ENCODE measurements at regions of chr3 and their contacts with region 1.

Region 1: DNA sequence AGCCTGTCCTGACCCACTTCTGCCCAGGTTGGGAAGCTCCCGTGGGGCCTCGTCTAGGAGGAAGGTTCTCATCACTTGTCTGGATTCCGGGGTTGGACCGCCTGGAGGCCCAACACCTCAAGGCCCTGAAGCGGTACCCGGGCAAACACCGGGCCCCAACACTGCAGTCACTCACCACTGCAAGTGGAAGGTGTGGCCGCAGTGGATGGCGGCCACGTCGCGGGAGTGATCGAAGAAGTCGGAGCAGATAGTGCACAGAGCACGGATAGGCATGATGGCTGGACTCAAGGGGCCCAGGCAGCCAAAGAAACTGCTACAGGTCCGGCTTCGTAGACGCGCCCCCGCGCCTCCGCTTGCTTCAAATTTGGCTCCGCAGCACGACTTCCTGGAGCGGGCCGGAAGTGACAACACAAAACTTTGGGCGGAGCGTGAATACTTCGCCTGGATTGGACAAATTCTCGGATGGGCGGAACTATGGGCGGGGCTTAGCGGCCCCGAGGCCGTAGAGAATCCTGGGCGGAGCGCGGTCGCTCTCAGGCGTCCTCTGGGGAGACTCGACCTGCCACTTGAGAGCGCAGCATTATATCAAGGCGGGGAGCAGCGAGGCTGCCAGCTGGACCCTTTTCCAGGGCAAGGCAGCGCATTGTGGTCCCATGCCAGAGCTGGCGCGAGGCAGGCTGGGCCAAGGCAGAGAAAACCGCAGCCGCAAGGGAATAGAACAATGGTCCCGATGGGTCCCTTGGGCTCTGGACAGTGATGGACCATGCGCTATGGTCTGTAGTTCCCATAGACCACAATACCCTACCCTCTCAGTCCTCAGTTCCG is at the start of gene TRAIP:
- DNase-seq: peak; percentile 83
- H3K4me3 ChIP-seq: peak within 1 kb of the TSS; percentile 80
- CTCF ChIP-seq: no peak

Region 2: GRCh38 chr3:49656541-49657112 is 199.8 kb before region 1 on chr3:
- in situ Hi-C with region 1: no loop called
- DNase-seq: no peak
- H3K4me3 ChIP-seq: no peak overlapping the region
- CTCF ChIP-seq: peak; percentile 30

Region 3: GRCh38 chr3:49747792-49748480 is 108.5 kb before region 1 on chr3:
- in situ Hi-C with region 1: loop called (anchors 25 kb)
- DNase-seq: peak; percentile 47
- H3K4me3 ChIP-seq: no peak overlapping the region
- CTCF ChIP-seq: no peak

Region 4: DNA sequence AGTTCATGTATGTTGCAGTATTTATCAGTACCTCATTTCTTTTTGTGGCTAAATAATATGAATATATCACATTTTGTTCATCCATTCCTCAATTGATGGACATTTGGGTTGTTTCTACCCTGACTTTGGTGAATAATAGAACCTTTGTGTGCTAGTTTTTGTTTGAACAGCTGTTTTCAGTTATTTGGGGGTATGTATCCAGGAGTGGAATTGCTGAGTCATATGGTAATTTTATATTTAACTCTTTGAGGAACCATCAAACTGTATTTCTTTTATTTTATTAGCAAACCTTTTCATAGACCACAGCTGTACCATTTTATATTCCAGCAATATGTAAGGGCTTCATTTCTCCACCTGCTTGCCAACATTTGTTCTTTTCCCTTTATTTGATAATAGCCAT is 194.0 kb after region 1 on chr3:
- in situ Hi-C with region 1: loop called (anchors 25 kb)
- DNase-seq: peak; percentile 90
- H3K4me3 ChIP-seq: no peak overlapping the region
- CTCF ChIP-seq: no peak

Measured in astrocyte of the cerebellum (primary cell).